Activated CD4-positive, alpha-beta memory T cell treated with anti-CD3 and anti-CD28 coated beads for 36 hours (primary cell): ENCODE measurements at regions of chr1 and their contacts with region 1.

Region 1: DNA sequence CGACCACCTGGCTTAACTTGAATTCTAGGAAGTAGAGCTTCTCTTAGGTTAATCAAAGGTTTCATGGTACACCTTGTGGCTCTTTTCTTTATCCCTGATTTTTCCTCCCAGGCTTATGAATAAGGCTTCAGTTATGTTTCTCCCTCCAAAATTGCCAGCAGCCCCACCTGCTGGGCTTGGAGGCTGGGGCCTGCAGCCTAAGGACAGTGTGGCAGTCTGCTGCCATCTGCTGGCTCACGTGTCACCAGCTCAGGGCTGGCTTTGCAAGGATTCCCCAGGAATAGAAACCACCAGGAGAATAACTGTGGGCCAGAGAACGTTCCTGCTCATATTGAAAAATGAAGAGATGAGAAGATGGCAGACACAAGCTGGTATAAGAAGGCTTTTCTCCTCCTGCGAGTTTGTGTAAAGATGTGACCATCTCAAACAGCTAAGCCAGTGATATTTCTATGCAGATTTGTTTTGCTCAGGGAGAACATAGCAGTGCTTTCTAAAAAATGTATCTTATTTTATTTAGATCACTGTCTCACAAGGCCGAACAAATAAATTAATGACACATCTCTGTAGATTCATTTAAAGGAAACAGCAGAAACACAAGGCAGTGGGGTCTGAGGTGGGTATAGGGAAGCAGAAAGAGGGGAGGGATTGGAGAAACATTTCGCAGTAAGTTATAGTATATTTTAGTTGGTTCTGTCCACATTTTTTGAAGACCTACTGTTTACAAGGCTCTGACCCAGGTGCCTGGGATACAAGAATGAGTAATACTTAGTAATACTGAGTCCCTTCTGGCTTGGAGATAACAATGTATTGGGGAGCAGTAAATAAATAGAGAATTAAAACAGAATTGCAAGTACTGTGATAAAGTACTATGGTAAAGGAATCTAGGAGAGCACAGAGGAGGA is 291.1 kb upstream of the SGIP1 start:
- DNase-seq: peak; percentile 84
- H3K4me3 Mint-ChIP-seq: no peak overlapping the region
- H3K27ac Mint-ChIP-seq: no peak overlapping the region
- H3K4me1 Mint-ChIP-seq: no peaks in the 10 kb centered on the region
- H3K27me3 Mint-ChIP-seq: peaks cover 6% of the 10 kb centered on the region

Region 2: GRCh38 chr1:65230731-65231481 is 1012.0 kb before region 1 on chr1:
- CTCF ChIA-PET with region 1: interaction called, 3 read pairs
- POLR2A ChIA-PET with region 1: interaction called, 4 read pairs
- intact Hi-C with region 1: loop called (anchors 5 kb)
- DNase-seq: peak; percentile 24
- H3K4me3 Mint-ChIP-seq: no peak overlapping the region
- H3K27ac Mint-ChIP-seq: peak overlapping the region; percentile 16
- H3K4me1 Mint-ChIP-seq: peaks cover 17% of the 10 kb centered on the region
- H3K27me3 Mint-ChIP-seq: peaks cover 7% of the 10 kb centered on the region

Region 3: GRCh38 chr1:65952696-65953095 is 290.2 kb before region 1 on chr1:
- CTCF ChIA-PET with region 1: interaction called, 113 read pairs
- POLR2A ChIA-PET with region 1: no interaction called
- intact Hi-C with region 1: no loop called
- DNase-seq: no peak
- H3K4me3 Mint-ChIP-seq: no peak overlapping the region
- H3K27ac Mint-ChIP-seq: no peak overlapping the region
- H3K4me1 Mint-ChIP-seq: peaks cover 12% of the 10 kb centered on the region
- H3K27me3 Mint-ChIP-seq: peaks cover 2% of the 10 kb centered on the region

Region 4: DNA sequence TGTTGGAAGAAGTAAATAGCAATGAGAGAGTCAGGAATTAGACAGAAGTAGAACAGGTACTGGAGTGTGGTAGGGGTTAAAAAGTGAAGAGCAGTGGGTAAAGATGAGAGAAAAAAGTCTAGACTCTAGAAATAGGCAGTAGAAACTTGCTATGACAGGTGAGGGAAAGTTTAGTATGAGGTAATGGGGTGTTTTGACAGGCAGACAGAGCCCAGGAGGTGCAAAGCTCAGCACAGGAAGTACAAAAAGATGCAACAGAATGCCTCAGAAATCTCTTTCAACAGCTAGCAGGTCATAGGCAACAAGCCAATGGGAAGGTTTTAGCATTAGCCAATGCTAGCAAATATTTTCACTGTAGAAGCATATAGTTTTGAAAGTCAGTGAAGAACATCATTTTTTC is 28.0 kb before region 1 on chr1:
- CTCF ChIA-PET with region 1: interaction called, 5 read pairs
- POLR2A ChIA-PET with region 1: no interaction called
- intact Hi-C with region 1: loop called (anchors 2 kb)
- DNase-seq: peak; percentile 33
- H3K4me3 Mint-ChIP-seq: no peak overlapping the region
- H3K27ac Mint-ChIP-seq: no peak overlapping the region
- H3K4me1 Mint-ChIP-seq: peaks cover 10% of the 10 kb centered on the region
- H3K27me3 Mint-ChIP-seq: no peaks in the 10 kb centered on the region

Region 5: DNA sequence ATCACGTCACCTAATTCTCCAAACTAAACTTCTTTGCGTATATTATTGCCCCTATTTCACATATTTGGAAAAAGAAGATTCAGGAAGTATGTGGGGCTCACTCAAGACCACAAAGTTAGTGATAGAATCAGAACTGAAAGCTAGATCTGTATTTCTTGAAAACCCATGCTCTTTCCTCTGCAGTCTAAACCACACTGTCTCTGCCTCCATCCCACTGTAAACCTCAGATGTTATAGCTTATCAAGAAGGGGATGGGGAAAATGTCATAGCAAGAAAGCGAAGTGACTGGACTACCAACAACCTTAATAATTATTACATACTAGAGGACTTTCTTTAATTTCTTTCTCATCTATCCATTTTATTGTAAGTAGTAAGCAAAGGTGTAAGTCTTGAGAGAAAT is 33.3 kb after region 1 on chr1:
- CTCF ChIA-PET with region 1: interaction called, 18 read pairs
- POLR2A ChIA-PET with region 1: interaction called, 4 read pairs
- intact Hi-C with region 1: no loop called
- DNase-seq: peak; percentile 44
- H3K4me3 Mint-ChIP-seq: peak overlapping the region; percentile 49
- H3K27ac Mint-ChIP-seq: peak overlapping the region; percentile 65
- H3K4me1 Mint-ChIP-seq: peaks cover 87% of the 10 kb centered on the region
- H3K27me3 Mint-ChIP-seq: no peaks in the 10 kb centered on the region

Region 6: GRCh38 chr1:66360285-66360724 is 117.4 kb after region 1 on chr1:
- CTCF ChIA-PET with region 1: interaction called, 23 read pairs
- POLR2A ChIA-PET with region 1: no interaction called
- intact Hi-C with region 1: no loop called
- DNase-seq: no peak
- H3K4me3 Mint-ChIP-seq: no peak overlapping the region
- H3K27ac Mint-ChIP-seq: no peak overlapping the region
- H3K4me1 Mint-ChIP-seq: peaks cover 83% of the 10 kb centered on the region
- H3K27me3 Mint-ChIP-seq: no peaks in the 10 kb centered on the region

Region 7: GRCh38 chr1:66503841-66504470 is 261.1 kb after region 1 on chr1:
- CTCF ChIA-PET with region 1: interaction called, 54 read pairs
- POLR2A ChIA-PET with region 1: no interaction called
- intact Hi-C with region 1: no loop called
- DNase-seq: peak; percentile 49
- H3K4me3 Mint-ChIP-seq: no peak overlapping the region
- H3K27ac Mint-ChIP-seq: no peak overlapping the region
- H3K4me1 Mint-ChIP-seq: no peaks in the 10 kb centered on the region
- H3K27me3 Mint-ChIP-seq: peaks cover 14% of the 10 kb centered on the region